Breast epithelium (tissue), 4 donors: ENCODE measurements at regions of chr16 and their contacts with region 1.

Region 1: DNA sequence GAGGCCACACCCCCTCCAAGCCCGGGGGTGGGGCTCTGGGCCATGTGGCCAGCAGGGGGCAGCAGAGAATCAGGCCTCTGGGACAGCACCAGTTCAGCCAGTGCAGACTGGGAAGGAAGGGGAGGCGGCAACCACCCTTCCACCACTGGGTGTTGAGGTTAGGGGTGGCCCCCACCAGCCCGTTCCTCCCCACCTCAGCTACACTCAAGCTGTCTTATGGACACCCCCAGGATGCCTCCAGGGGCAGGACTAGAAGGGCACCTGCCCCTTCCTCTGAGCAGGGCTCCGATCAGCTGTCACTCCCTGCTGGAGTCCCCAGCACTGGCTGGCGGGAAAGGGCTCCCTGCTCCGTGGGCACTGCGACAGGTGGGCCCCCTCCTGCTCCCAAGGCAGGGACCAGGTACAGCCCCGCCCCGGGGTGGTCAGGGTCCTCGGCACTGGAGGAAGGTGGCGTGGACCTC is 21.8 kb downstream of the KATNB1 start:
- DNase-seq: peak; percentile 76 to 90
- H3K4me3 ChIP-seq: no peak overlapping the region
- H3K27ac ChIP-seq: peak overlapping the region; percentile 29 to 53
- H3K4me1 ChIP-seq: no peaks in the 10 kb centered on the region
- H3K27me3 ChIP-seq: no peaks in the 10 kb centered on the region
- CTCF ChIP-seq: peak; percentile 76 to 92 (median 91)
- POLR2A ChIP-seq: no peak

Region 2: DNA sequence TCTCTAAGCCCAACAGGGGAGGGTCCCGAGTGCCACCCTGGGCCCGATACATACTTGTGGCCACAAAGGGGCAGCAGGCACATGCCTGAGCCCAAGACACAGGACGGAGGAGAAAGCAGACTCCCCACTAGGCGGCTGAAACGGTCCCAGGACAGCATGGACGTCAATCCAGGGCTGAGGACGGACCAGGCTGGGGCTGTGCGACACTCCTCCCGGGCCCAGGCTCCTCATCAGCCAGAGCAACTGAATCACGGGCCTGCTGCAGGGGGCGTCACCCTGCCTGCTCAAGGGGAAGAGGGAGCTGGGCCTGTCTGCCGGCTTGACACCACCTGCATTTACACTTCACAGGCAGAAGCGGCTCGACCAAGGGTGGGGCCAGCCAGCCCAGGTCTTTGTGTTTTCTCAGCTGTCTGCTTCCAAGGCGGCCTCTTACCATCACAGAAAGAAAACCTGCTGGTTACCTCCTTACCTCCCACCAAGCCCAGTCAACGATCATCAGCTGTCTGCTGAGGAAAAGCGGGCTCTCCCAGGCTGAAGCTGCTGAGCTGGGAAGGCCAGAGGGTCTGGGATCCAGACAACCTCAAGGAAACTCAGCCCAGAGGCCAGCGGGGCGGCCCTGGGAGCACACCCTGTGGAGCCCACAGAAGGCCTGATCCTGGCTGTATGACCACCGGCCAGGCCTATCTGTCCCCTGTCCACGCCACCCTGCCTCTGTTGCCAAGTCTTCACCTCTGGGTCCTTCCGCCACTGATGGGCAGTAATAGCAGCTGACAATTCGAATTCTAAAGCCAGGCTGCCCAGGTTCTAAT is 18.5 kb after region 1 on chr16:
- intact Hi-C with region 1: loop called (anchors 1 kb)
- DNase-seq: no peak
- H3K4me3 ChIP-seq: no peak overlapping the region
- H3K27ac ChIP-seq: no peak overlapping the region
- H3K4me1 ChIP-seq: no peaks in the 10 kb centered on the region
- H3K27me3 ChIP-seq: no peaks in the 10 kb centered on the region
- CTCF ChIP-seq: no peak
- POLR2A ChIP-seq: no peak

Region 3: DNA sequence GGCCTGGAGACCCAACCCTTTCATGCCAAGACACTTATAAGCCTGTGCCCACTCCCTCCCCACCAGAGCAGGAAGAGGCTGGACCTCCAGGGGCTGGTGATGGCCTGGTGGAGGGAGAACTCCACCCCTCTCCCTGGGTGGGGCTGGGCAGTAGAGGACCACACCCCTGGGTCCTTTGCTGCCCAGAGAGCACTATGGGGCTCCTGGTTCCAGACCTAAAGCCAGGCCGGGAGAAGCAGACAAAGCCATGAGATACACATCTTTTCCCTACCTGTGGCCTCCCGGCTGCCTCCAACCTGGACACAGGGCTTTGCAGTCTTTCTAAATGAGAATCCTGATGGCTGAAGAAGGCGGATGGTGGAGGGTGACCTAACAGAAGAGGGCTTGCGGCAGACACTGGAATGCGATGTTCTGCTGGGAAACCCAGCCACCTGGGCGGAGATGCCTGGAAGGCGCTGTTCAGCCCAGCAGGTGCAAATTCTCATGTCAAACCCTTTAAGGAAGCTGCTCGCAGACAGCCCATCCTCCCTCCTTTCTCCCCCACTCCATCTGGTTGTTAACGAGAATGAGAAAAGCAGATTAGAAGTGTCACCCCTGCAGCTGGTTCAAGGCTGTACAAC is 88.8 kb after region 1 on chr16:
- intact Hi-C with region 1: loop called (anchors 10 kb)
- DNase-seq: no peak
- H3K4me3 ChIP-seq: no peak overlapping the region
- H3K27ac ChIP-seq: no peak overlapping the region
- H3K4me1 ChIP-seq: no peaks in the 10 kb centered on the region
- H3K27me3 ChIP-seq: no peaks in the 10 kb centered on the region
- CTCF ChIP-seq: no peak
- POLR2A ChIP-seq: no peak